ENCODE measurements at regions of chr11 and their contacts with region 1.

Region 1: DNA sequence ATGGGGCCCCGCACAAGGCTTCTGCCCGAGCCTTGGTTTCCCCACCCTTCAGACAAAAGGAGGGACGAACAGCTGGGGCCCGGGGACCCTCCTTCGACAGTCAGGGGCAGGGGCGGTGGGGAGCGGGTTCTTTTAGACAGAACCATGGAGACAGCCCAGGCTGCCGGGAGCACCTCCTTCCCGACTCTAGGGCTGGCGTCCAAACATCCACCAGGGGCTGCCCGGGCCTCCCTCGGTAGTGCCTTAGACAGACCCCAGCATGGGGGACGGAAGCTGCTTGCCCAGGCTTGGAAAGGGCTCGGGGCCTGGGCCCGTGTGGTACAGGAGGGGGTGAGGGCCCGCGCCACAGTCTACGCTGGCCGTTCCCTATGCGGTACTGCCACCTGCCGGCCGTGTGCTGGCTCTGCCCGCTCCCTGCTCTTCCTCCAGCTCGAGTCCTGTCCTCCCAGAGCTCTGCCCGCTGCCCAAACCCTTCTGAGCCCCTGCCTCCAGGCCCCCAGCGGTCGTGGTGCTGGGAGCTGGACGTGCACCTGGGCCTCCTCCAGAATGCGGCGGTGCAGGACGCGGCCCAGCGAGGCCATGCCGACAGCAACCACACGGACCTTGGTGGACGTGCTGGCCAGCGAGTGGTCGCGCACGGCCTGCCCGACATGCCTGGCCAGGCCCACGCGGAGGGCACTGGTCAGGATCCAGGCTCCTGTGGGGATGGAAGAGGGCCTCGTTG is 20.1 kb downstream of the TSSC4 start:
- DNase-seq: peak; percentile 86
- ATAC-seq: peak; percentile 95
- H3K4me3 ChIP-seq: no peak overlapping the region
- H3K4me3 Mint-ChIP-seq: no peak overlapping the region
- H3K27ac ChIP-seq: no peak overlapping the region
- H3K27ac Mint-ChIP-seq: peak overlapping the region; percentile 3
- H3K4me1 ChIP-seq: peaks cover 5 to 15% of the 10 kb centered on the region in 2 donors
- H3K4me1 Mint-ChIP-seq: peaks cover 3% of the 10 kb centered on the region
- H3K27me3 ChIP-seq: peaks cover 0 to 3% (median 0%) of the 10 kb centered on the region in 4 experiments
- H3K27me3 Mint-ChIP-seq: no peaks in the 10 kb centered on the region
- CTCF ChIP-seq: peak; percentile 83

Region 2: DNA sequence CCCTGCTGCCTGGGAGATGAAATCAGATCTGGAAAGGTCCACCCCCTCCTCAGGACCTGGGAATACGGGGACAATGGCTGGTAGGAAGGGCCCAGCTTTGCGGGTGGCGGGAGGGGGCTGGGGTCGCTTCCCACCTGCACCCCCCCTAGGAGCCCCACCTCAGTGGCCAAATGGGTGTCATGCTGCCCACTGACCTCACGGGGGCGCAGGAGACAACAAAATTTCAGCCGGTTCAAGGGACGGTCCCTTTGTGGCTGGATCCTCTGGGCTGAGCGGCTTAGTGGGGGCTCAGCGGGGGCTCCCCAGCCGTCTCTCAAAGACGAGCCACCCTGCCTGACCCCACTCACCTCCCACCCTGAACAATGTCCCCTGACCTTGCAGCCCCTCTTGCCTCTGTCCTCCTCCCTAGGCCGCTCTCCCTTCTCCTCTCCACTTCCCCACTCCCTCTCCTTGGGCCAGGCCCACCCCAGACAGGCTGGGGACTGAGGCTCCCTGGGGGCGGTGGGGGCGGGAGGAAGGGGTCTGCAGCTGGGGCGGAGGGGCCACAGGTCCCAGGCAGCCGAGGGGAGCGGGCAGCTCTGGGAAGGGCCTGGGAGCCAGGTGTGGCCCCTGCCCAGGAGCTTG is 383.7 kb before region 1 on chr11:
- CTCF ChIA-PET with region 1: interaction called, 11 read pairs
- POLR2A ChIA-PET with region 1: no interaction called
- intact Hi-C with region 1: no loop called
- DNase-seq: no peak
- ATAC-seq: peak; percentile 57
- H3K4me3 ChIP-seq: no peak overlapping the region
- H3K4me3 Mint-ChIP-seq: no peak overlapping the region
- H3K27ac ChIP-seq: no peak overlapping the region
- H3K27ac Mint-ChIP-seq: no peak overlapping the region
- H3K4me1 ChIP-seq: no peaks in the 10 kb centered on the region
- H3K4me1 Mint-ChIP-seq: no peaks in the 10 kb centered on the region
- H3K27me3 ChIP-seq: no peaks in the 10 kb centered on the region
- H3K27me3 Mint-ChIP-seq: no peaks in the 10 kb centered on the region
- CTCF ChIP-seq: no peak

Region 3: GRCh38 chr11:2186669-2187279 is 233.9 kb before region 1 on chr11:
- CTCF ChIA-PET with region 1: interaction called, 42 read pairs
- POLR2A ChIA-PET with region 1: no interaction called
- intact Hi-C with region 1: loop called (anchors 1 kb)
- DNase-seq: peak; percentile 69
- ATAC-seq: peak; percentile 78
- H3K4me3 ChIP-seq: no peak overlapping the region
- H3K4me3 Mint-ChIP-seq: no peak overlapping the region
- H3K27ac ChIP-seq: no peak overlapping the region
- H3K27ac Mint-ChIP-seq: no peak overlapping the region
- H3K4me1 ChIP-seq: peaks cover 9 to 19% of the 10 kb centered on the region in 2 donors
- H3K4me1 Mint-ChIP-seq: peaks cover 11% of the 10 kb centered on the region
- H3K27me3 ChIP-seq: peaks cover 0 to 5% (median 0%) of the 10 kb centered on the region in 4 experiments
- H3K27me3 Mint-ChIP-seq: peaks cover 13% of the 10 kb centered on the region
- CTCF ChIP-seq: peak; percentile 64

Region 4: DNA sequence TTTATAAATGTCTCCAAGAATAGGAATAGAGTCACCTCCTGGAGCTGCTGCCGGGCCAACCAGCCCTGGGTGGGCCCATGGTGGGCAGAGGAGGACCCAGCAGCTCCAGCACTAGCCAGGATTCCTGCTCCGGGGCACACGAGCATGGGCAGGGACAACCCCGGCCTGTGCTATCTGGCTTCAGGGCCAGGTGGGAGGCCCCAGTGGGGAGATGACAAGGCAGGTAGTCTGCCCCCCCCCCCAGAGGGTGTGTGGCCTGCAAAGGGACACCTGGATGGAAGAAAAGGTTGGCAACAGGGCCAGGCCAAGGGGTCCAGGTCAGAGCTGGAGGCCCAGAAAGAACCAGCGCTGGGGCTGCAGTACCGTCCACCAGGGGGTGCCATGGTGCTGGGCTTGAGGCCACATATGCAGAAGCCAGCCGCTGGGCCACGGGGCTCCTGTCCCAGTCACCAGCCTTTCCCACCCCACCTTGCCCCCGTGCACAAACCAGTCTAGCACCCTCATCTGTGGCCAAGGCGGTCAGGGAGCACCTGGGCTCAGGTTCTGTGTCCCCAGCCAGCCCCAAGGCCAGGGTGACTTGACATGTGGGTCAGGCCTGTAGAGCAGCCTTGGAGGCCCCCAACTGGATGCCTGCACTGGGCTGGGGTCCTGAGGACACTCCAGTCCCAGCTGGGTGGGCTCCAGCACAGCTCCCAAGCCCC is 115.4 kb before region 1 on chr11:
- CTCF ChIA-PET with region 1: interaction called, 583 read pairs
- POLR2A ChIA-PET with region 1: interaction called, 22 read pairs
- intact Hi-C with region 1: no loop called
- DNase-seq: peak; percentile 85
- ATAC-seq: peak; percentile 56
- H3K4me3 ChIP-seq: no peak overlapping the region
- H3K4me3 Mint-ChIP-seq: peak overlapping the region; percentile 59
- H3K27ac ChIP-seq: peak overlapping the region in 1 of 2 donors; percentile 40
- H3K27ac Mint-ChIP-seq: peak overlapping the region; percentile 67
- H3K4me1 ChIP-seq: peaks cover 59 to 62% of the 10 kb centered on the region in 2 donors
- H3K4me1 Mint-ChIP-seq: peaks cover 51% of the 10 kb centered on the region
- H3K27me3 ChIP-seq: no peaks in the 10 kb centered on the region
- H3K27me3 Mint-ChIP-seq: no peaks in the 10 kb centered on the region
- CTCF ChIP-seq: peak; percentile 93

Region 5: DNA sequence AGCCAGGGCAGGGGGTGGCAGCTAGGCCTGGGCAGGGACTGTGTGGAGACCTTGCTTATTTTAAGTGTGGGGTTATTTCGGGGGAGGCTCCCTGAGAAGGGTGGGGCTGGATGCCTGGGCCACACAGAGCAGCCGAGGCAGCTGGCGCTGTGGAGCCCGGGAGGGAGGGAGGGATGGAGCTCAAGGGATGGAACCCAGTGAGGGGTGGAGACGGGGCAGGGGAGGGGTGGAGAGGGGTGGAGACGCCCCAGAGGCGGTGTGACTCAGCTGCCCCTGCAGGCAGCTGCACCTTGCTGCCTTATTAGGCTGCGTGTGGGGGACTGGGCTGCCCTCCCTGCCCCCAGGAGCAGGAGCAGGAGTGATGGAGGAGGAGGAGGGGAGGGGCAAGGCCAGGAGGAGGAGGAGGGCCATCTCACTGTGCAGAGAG is 29.9 kb before region 1 on chr11:
- CTCF ChIA-PET with region 1: interaction called, 13 read pairs
- POLR2A ChIA-PET with region 1: no interaction called
- intact Hi-C with region 1: no loop called
- DNase-seq: no peak
- ATAC-seq: no peak
- H3K4me3 ChIP-seq: no peak overlapping the region
- H3K4me3 Mint-ChIP-seq: peak overlapping the region; percentile 55
- H3K27ac ChIP-seq: no peak overlapping the region
- H3K27ac Mint-ChIP-seq: peak overlapping the region; percentile 66
- H3K4me1 ChIP-seq: peaks cover 100% of the 10 kb centered on the region in 2 donors
- H3K4me1 Mint-ChIP-seq: peaks cover 83% of the 10 kb centered on the region
- H3K27me3 ChIP-seq: no peaks in the 10 kb centered on the region
- H3K27me3 Mint-ChIP-seq: no peaks in the 10 kb centered on the region
- CTCF ChIP-seq: no peak

Region 6: DNA sequence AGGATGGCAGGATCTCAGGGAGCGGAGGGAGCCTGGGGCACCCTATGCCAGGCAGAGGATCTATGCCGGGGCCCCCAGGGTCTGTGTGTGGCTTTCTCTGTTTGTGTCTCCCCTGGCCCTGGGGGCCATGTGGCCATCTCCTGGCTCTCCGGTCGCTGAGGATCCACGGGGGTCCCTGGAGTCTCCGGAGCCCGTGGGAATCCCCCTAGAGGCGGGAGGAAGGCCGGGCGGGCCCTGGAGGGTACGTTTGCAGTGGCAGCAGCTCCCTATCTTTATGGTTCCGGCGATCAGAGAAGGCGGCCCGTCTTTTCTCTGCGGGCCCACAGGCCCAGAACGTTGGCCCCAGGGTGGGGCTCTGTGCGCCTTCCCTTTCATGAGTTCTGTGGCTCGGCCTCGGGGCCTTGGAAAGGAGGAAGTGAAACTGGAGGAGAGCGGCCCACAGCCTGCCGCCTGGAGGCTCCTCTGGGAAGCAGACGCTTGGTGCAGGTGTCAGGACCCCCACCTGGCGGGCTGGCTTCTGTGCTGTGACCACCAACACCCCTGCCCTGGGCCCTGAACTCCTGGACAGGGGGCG is 106.2 kb after region 1 on chr11:
- CTCF ChIA-PET with region 1: interaction called, 217 read pairs
- POLR2A ChIA-PET with region 1: interaction called, 3 read pairs
- intact Hi-C with region 1: no loop called
- DNase-seq: peak; percentile 89
- ATAC-seq: peak; percentile 91
- H3K4me3 ChIP-seq: peak overlapping the region in 4 of 5 experiments; percentile 14 to 57 (median 36)
- H3K4me3 Mint-ChIP-seq: peak overlapping the region; percentile 83
- H3K27ac ChIP-seq: peak overlapping the region; percentile 66 to 72
- H3K27ac Mint-ChIP-seq: peak overlapping the region; percentile 91
- H3K4me1 ChIP-seq: peaks cover 25 to 41% of the 10 kb centered on the region in 2 donors
- H3K4me1 Mint-ChIP-seq: peaks cover 45% of the 10 kb centered on the region
- H3K27me3 ChIP-seq: no peaks in the 10 kb centered on the region
- H3K27me3 Mint-ChIP-seq: no peaks in the 10 kb centered on the region
- CTCF ChIP-seq: peak; percentile 61

Measured in B cell (primary cell).